ENCODE measurements at regions of chr13 and their contacts with region 1.

Region 1: DNA sequence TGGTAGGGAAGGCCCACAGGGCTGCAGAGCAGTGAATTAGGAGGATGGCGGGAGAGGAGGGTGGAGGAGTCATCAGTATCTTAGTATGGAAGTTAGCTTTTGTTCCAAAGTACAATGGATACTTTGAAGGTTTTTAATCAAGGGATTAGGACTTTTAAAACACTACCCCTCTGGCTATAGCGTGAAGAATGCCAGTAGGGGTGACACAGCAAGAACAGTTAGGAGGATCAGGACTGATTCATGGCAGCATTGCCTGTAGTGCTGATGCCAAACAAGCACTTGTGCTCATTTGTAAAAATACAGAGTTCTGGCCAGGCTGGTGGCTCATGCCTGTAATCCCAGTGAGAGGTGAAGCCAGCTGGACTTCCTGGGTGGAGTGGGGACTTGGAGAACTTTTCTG is 46.2 kb downstream of the SKA3 start:
- DNase-seq: no peak
- ATAC-seq: no peak

Region 2: DNA sequence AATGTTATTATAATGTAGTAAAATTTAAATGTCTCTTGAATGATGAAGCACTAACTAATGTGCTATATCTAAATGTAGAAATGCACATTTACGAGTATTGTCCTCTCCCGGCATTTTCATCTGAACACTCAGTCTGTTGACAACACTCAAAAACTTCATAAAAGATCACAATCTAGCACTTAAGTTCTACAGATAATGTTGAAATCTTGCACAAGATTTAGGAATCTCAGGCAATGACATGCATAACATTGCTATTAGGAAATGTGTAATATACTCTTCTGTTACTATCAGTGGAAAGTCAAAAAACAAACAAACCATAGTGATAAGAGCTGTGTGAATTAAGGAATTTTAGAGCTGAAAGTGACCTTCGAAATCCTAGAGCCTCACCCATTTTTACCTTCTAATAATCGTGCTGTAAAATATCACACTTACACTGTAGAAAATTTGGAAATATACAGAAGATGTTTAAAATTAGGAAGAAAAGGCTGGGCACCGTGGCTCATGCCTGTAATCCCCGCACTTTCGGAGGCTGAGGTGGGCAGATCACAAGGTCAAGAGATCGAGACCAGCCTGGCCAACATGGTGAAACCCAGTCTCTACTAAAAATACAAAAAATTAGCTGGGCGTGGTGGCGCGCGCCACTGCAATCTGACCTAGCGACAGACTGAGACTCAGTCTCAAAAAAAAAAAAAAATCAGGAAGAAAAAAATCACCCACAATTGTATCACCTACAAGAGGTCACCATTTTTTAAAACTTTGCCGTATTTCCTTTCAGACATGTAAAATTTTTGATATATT is 189.8 kb before region 1 on chr13:
- intact Hi-C with region 1: loop called (anchors 5 kb)
- DNase-seq: no peak
- ATAC-seq: no peak

Region 3: DNA sequence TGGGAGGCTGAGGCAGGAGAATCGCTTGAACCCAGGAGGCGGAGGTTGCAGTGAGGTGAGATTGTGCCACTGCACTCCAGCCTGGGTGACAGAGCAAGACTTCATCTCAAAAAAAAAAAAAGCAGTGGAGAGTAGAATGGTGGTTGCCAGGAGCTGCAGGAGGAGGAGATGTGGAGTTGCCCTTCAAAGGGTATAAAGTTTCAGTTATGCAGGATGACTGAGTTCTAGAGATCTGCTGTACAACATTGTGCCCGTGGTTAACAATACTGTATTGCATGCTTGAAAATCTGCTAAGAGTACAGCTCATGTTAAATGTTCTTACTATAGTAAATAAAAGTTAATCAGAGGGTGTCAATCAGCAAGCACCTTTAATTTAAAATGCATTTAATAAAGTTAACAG is 40.3 kb before region 1 on chr13:
- intact Hi-C with region 1: no loop called
- DNase-seq: no peak
- ATAC-seq: no peak

Measured in sciatic nerve (tissue), 2 donors.